MCF 10A (cell line): ENCODE measurements at regions of chr17 and their contacts with region 1.

Region 1: GRCh38 chr17:75632863-75633485 is at the start of gene SMIM5:
- DNase-seq: peak; percentile 78
- H3K4me3 Mint-ChIP-seq: peak within 1 kb of the TSS; percentile 19
- H3K27ac Mint-ChIP-seq: peak within 1 kb of the TSS; percentile 55
- H3K4me1 Mint-ChIP-seq: peaks cover 10% of the 10 kb centered on the region
- H3K27me3 Mint-ChIP-seq: no peaks in the 10 kb centered on the region
- CTCF ChIP-seq: peak; percentile 90
- total RNA-seq, gene SMIM5: 0.09 TPM in 1 of 2 replicates, not detected in the other

Region 2: DNA sequence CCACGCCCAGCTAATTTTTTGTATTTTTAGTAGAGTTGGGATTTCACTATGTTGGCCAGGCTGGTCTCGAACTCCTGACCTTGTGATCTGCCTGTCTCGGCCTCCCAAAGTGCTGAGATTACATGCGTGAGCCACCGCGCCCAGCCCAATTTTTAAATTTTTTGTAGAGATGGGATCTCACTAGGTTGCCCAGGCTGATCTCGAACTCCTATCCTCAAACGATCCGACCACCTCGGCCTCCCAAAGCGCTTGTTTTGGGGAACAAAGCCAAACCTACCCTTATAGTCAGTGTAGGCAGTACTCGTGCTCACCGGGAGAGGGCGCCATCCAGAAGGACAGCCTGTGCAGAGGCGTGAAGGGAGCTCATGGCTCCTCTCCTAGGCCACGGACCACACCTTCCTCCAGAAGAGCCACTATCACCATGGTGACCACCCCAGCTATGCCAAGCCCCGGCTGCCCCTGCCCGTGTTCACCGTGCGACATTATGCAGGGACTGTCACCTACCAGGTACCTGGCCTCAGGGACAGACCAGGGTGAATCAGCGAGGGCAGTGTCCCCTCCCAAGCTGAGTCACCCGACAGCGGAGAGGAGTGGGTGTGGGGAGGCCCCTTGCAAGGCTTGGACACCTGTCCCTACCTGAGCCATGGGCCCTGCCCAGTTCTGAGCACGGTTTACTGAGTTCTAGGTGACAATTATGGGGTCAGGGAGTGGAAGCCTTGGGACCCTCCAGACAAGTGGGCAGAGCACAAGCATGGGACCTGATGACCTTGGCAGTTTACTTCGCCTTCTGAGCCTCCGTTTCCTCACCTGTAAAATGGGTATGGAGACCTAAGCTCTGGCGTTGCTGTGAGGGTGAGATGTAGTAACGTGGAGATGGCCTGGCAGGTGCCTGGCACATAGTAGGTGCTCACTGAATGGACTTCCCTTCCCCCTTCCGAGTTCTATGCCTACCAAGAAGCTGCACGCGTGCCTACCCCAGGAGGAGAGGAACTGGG is 31.6 kb before region 1 on chr17:
- CTCF ChIA-PET with region 1: interaction called, 24 read pairs
- POLR2A ChIA-PET with region 1: no interaction called
- intact Hi-C with region 1: no loop called
- DNase-seq: peak; percentile 70
- H3K4me3 Mint-ChIP-seq: no peak overlapping the region
- H3K27ac Mint-ChIP-seq: no peak overlapping the region
- H3K4me1 Mint-ChIP-seq: peaks cover 18% of the 10 kb centered on the region
- H3K27me3 Mint-ChIP-seq: no peaks in the 10 kb centered on the region
- CTCF ChIP-seq: peak; percentile 79

Region 3: GRCh38 chr17:75610103-75610984 is 22.6 kb before region 1 on chr17:
- CTCF ChIA-PET with region 1: interaction called, 25 read pairs
- POLR2A ChIA-PET with region 1: interaction called, 4 read pairs
- intact Hi-C with region 1: no loop called
- DNase-seq: no peak
- H3K4me3 Mint-ChIP-seq: no peak overlapping the region
- H3K27ac Mint-ChIP-seq: no peak overlapping the region
- H3K4me1 Mint-ChIP-seq: peaks cover 8% of the 10 kb centered on the region
- H3K27me3 Mint-ChIP-seq: no peaks in the 10 kb centered on the region
- CTCF ChIP-seq: no peak

Region 4: GRCh38 chr17:75619506-75620431 is 13.2 kb before region 1 on chr17:
- CTCF ChIA-PET with region 1: interaction called, 27 read pairs
- POLR2A ChIA-PET with region 1: interaction called, 15 read pairs
- intact Hi-C with region 1: no loop called
- DNase-seq: peak; percentile 33
- H3K4me3 Mint-ChIP-seq: no peak overlapping the region
- H3K27ac Mint-ChIP-seq: peak overlapping the region; percentile 42
- H3K4me1 Mint-ChIP-seq: no peaks in the 10 kb centered on the region
- H3K27me3 Mint-ChIP-seq: peaks cover 17% of the 10 kb centered on the region
- CTCF ChIP-seq: peak; percentile 34

Region 5: GRCh38 chr17:75652915-75653549 is 20.1 kb after region 1 on chr17:
- CTCF ChIA-PET with region 1: interaction called, 75 read pairs
- POLR2A ChIA-PET with region 1: interaction called, 3 read pairs
- intact Hi-C with region 1: no loop called
- DNase-seq: peak; percentile 38
- H3K4me3 Mint-ChIP-seq: no peak overlapping the region
- H3K27ac Mint-ChIP-seq: no peak overlapping the region
- H3K4me1 Mint-ChIP-seq: no peaks in the 10 kb centered on the region
- H3K27me3 Mint-ChIP-seq: no peaks in the 10 kb centered on the region
- CTCF ChIP-seq: peak; percentile 54

Region 6: DNA sequence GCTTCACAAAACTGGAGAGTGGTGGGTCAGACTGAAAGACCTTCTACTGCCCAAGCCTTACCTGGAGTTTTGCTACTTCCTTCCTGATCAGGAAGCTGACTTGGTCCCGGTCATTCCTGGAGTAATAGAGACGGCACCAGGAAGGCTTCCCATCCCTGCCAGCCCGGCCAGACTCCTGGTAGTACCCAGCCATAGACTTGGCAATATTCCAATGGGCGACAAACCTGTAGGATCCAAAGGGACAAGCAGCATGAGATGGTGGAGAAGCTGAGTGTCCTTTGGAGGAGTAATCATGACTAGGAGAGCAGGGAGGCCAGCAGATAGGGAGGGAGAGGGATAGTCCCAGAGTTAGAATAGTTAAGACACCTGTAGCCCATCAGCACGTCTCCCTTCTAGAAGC is 25.3 kb after region 1 on chr17:
- CTCF ChIA-PET with region 1: interaction called, 52 read pairs
- POLR2A ChIA-PET with region 1: interaction called, 3 read pairs
- intact Hi-C with region 1: no loop called
- DNase-seq: no peak
- H3K4me3 Mint-ChIP-seq: no peak overlapping the region
- H3K27ac Mint-ChIP-seq: no peak overlapping the region
- H3K4me1 Mint-ChIP-seq: no peaks in the 10 kb centered on the region
- H3K27me3 Mint-ChIP-seq: no peaks in the 10 kb centered on the region
- CTCF ChIP-seq: no peak

Region 7: DNA sequence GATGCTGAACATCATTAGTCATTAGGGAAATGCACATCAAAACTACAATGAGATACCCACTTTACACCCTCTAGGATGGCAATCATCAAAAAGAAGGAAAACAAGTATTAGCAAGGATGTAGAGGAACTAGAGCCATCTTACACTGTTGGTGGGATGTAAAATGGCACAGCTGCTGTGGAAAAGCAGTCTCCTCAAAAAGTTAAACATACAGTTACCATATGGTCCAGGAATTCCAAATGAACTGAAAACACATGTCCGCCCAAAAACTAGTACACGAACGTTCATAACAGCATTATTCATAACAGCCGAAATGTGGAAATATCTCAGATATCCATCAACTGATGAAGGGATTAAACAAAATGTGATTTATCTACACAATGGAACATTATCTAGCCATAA is 300.8 kb after region 1 on chr17:
- CTCF ChIA-PET with region 1: no interaction called
- POLR2A ChIA-PET with region 1: no interaction called
- intact Hi-C with region 1: no loop called
- DNase-seq: no peak
- H3K4me3 Mint-ChIP-seq: no peak overlapping the region
- H3K27ac Mint-ChIP-seq: no peak overlapping the region
- H3K4me1 Mint-ChIP-seq: no peaks in the 10 kb centered on the region
- H3K27me3 Mint-ChIP-seq: no peaks in the 10 kb centered on the region
- CTCF ChIP-seq: no peak